Activated naive CD4-positive, alpha-beta T cell treated with anti-CD3 and anti-CD28 coated beads for 36 hours (primary cell): ENCODE measurements at regions of chr2 and their contacts with region 1.

Region 1: DNA sequence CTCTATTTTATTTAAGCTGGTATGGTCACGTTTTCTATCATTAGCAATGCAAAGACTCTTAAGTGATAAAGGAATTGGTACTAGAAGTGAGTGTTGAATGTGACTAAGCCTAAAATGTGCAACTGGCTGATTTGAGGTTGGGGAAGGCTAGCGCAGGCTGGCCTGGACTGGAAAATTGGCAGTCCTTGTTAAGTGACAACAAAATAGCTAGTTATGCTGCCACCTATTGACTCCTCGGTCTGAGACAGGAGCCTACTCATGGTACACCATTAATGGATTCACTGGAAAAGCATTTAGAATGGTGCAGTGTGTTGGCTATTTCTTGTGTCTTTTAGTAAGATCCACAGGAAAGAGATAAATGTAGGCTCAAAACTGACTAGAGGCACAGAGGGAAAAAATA is 5.7 kb upstream of the WIPF1 start:
- DNase-seq: peak; percentile 85
- H3K4me3 Mint-ChIP-seq: no peak overlapping the region
- H3K27ac Mint-ChIP-seq: peak overlapping the region; percentile 76
- H3K4me1 Mint-ChIP-seq: peaks cover 81% of the 10 kb centered on the region
- H3K27me3 Mint-ChIP-seq: no peaks in the 10 kb centered on the region

Region 2: DNA sequence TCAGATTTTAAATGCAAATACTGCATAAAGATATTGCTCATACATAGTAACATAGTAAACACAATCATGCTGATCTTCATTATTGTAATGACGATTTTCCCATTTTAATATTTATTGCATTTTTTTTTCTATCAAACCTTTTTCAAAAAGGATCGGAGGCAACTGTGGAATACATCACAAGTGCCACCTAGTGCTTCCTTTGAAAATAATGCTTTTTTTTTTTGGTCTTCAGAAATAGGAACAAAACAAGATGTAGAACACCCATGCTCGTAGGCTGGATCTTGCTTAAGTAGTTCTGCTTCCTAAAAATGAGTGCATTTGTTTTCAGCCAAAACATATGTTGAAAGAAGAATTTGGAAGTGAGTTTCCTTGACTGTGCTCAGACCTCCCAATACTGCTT is 80.7 kb before region 1 on chr2:
- CTCF ChIA-PET with region 1: interaction called, 3 read pairs
- intact Hi-C with region 1: loop called (anchors 2 kb)
- DNase-seq: no peak
- H3K4me3 Mint-ChIP-seq: no peak overlapping the region
- H3K27ac Mint-ChIP-seq: no peak overlapping the region
- H3K4me1 Mint-ChIP-seq: peaks cover 14% of the 10 kb centered on the region
- H3K27me3 Mint-ChIP-seq: no peaks in the 10 kb centered on the region

Region 3: GRCh38 chr2:174577967-174578589 is 25.2 kb before region 1 on chr2:
- CTCF ChIA-PET with region 1: interaction called, 224 read pairs
- intact Hi-C with region 1: loop called (anchors 1 kb)
- DNase-seq: peak; percentile 77
- H3K4me3 Mint-ChIP-seq: no peak overlapping the region
- H3K27ac Mint-ChIP-seq: peak overlapping the region; percentile 30
- H3K4me1 Mint-ChIP-seq: peaks cover 69% of the 10 kb centered on the region
- H3K27me3 Mint-ChIP-seq: no peaks in the 10 kb centered on the region

Region 4: DNA sequence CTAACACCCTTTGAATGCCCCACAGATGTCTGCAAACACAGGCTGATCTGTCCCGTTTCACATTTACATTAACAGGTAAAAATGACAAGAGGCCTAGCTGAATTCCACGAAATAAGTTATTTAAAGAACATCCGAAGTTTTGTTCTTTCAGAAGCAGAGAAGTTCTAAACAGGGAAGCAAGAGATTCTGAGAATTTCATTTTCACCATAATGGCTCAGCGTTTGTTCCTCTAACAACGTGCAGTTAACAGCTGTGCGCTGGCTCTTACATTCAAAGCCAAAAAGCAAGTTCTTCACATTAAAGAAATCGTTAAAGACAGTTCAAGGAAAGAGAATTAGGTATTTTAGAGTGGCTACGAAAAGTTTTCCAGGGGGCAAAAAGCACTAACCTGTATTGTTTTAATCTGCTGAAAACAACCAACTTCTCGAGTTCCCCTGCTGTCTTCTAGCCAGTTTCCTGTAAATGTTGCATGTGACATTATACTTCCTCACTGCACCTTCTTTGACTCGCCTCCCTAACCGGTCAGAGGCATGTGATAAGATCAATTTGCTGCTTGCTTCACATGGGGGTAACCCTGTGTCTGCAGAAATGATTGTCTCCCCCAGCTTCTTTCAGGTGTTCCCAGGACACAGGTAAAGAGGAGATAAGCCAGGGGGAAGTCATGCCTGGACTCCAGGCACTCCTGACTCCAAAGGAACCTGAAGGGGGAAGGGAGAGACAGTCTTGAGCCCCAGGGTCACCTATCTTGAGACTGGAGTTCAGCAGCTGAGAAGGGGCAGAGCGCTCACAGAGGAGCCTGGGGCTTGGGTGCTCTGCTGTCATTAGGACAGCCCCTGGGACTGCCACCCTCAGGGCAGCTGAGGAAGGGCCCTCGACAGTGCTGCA is 31.1 kb after region 1 on chr2:
- CTCF ChIA-PET with region 1: interaction called, 172 read pairs
- intact Hi-C with region 1: loop called (anchors 1 kb)
- DNase-seq: peak; percentile 79
- H3K4me3 Mint-ChIP-seq: peak overlapping the region; percentile 91
- H3K27ac Mint-ChIP-seq: peak overlapping the region; percentile 99
- H3K4me1 Mint-ChIP-seq: peaks cover 60% of the 10 kb centered on the region
- H3K27me3 Mint-ChIP-seq: no peaks in the 10 kb centered on the region

Region 5: GRCh38 chr2:174971865-174972781 is 368.8 kb after region 1 on chr2:
- CTCF ChIA-PET with region 1: no interaction called
- intact Hi-C with region 1: no loop called
- DNase-seq: no peak
- H3K4me3 Mint-ChIP-seq: no peak overlapping the region
- H3K27ac Mint-ChIP-seq: no peak overlapping the region
- H3K4me1 Mint-ChIP-seq: peaks cover 10% of the 10 kb centered on the region
- H3K27me3 Mint-ChIP-seq: no peaks in the 10 kb centered on the region